ENCODE measurements at regions of chr1 and their contacts with region 1.

Region 1: DNA sequence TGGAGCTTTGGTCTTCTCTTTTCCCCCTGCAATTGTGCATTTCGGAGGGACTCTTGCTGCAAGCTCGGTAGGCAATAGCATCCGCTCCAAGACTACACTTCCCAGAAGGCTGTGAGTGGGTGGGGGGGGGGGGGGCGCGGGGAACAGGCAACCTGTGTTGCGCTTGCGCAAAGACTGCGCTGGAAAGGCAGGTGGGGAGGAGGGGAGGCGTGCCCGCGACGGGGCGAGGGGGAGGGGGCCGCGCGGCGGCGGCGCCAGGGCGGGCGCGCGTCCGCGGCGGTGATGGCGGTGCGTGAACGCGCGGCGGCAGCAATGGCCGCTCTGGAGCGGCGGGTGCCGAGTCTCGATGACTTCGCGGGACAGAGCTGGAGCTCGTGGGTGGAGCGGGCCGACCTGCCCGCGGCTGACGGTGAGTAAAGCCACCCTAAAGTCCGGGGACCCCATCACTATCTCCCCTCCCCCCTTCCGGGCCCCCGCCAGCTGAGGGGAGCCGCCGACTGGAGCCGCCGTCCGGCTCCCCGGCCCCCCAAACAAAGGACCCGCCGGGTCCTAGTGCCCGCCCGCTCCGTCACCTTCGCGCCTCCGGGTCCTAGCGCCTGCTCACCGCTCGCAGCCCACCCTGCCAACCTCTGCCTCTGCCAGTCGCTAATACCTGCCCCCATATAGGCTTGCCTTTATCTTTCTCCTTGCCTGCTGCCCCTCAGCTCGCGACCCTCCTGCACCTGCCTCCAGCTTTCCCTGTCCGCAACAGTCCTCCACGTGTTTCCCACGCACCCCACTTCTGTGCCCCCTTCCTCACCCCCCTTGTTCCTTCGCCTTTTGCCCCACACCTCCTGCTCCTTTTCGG is at the start of gene ATXN7L2:
- DNase-seq: peak; percentile 93
- H3K4me3 Mint-ChIP-seq: peak within 1 kb of the TSS; percentile 95
- H3K27ac Mint-ChIP-seq: peak within 1 kb of the TSS; percentile 85
- H3K4me1 Mint-ChIP-seq: peaks cover 24% of the 10 kb centered on the region
- H3K27me3 Mint-ChIP-seq: no peaks in the 10 kb centered on the region
- total RNA-seq, gene ATXN7L2: 15.2 to 16.4 TPM

Region 2: GRCh38 chr1:109282952-109283747 is 200.7 kb before region 1 on chr1 and contains the start of gene PSRC1:
- CTCF ChIA-PET with region 1: no interaction called
- intact Hi-C with region 1: loop called (anchors 2 kb)
- DNase-seq: peak; percentile 94
- H3K4me3 Mint-ChIP-seq: peak within 1 kb of the TSS; percentile 94
- H3K27ac Mint-ChIP-seq: peak within 1 kb of the TSS; percentile 89
- H3K4me1 Mint-ChIP-seq: peaks cover 6% of the 10 kb centered on the region
- H3K27me3 Mint-ChIP-seq: no peaks in the 10 kb centered on the region
- total RNA-seq, gene PSRC1: 19.3 to 21.5 TPM

Region 3: DNA sequence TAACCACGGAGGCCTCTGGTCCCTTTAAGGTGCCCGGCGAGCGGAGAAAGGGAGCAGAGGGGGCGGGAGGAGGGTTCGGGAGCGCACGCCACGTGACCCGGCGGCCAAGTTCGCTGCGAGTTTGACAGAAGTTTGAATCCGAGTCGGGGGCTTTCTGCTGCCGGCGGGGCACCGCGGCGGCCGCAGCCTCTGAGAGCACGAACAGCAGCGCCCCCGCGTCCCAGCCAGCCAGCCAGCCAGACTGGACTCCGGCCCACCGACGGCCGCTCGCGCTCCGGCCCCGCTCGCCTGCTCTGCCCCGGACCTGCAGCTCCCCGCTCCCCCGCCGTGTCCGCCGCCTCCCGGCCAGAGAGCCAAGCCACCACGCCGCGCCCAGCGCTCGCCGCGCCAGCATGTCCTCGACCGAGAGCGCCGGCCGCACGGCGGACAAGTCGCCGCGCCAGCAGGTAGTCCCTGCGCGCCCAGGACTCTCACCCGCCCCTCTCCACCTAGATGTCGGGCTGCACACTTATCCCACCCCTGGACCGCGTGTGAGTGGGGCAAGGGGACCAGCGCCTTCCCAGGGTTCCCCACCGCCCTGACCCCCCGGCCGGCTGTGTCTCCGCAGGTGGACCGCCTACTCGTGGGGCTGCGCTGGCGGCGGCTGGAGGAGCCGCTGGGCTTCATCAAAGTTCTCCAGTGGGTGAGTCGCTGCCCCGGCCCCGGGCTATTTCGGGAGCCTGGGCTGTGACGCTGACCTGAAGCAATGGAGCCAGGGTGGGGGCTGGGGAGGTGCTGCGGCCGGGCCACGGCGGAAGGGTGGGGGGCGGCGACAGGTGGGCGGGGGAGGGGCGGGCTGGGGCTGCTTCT is 17.2 kb before region 1 on chr1 and contains the start of gene SYPL2:
- CTCF ChIA-PET with region 1: interaction called, 5 read pairs
- intact Hi-C with region 1: loop called (anchors 2 kb)
- DNase-seq: peak; percentile 20
- H3K4me3 Mint-ChIP-seq: peak within 1 kb of the TSS; percentile 53
- H3K27ac Mint-ChIP-seq: no peak within 1 kb of the TSS
- H3K4me1 Mint-ChIP-seq: peaks cover 11% of the 10 kb centered on the region
- H3K27me3 Mint-ChIP-seq: peaks cover 56% of the 10 kb centered on the region
- total RNA-seq, gene SYPL2: 0.05 TPM in 1 of 2 experiments, not detected in the other

Region 4: GRCh38 chr1:109509176-109510134 is 25.6 kb after region 1 on chr1 and contains the start of gene AMIGO1:
- CTCF ChIA-PET with region 1: interaction called, 375 read pairs
- intact Hi-C with region 1: loop called (anchors 2 kb)
- DNase-seq: peak; percentile 54
- H3K4me3 Mint-ChIP-seq: peak within 1 kb of the TSS; percentile 88
- H3K27ac Mint-ChIP-seq: peak within 1 kb of the TSS; percentile 73
- H3K4me1 Mint-ChIP-seq: peaks cover 59% of the 10 kb centered on the region
- H3K27me3 Mint-ChIP-seq: no peaks in the 10 kb centered on the region
- total RNA-seq, gene AMIGO1: 1.5 to 1.7 TPM

Measured in activated naive CD4-positive, alpha-beta T cell treated with anti-CD3 and anti-CD28 coated beads for 36 hours (primary cell).